GM10248 (cell line): ENCODE measurements at regions of chr4 and their contacts with region 1.

Region 1: GRCh38 chr4:81471588-81472288 is at the start of gene RASGEF1B:
- DNase-seq: peak; percentile 91
- CTCF ChIP-seq: no peak

Region 2: GRCh38 chr4:81432825-81433224 is 38.9 kb before region 1 on chr4:
- CTCF ChIA-PET with region 1: interaction called, 10 read pairs
- POLR2A ChIA-PET with region 1: no interaction called
- DNase-seq: no peak
- CTCF ChIP-seq: no peak

Region 3: DNA sequence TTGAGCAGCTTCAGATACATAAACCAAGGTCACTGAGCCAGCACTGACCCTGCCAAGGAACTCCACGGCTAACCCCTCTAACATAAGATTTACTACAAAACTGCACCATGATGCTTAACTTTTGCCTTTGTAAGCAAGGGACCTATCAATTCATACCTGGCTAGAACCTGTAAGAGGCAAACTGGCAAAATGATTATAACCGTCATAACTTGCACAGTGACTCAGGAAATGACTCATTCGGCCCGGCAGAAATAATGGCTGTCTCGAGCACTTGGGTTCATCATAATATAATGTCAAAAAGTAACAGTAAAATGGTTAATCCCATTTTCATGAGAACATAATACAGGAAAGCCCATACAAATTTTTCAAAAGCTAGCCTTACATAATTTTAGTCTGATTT is 17.2 kb before region 1 on chr4:
- CTCF ChIA-PET with region 1: interaction called, 32 read pairs
- POLR2A ChIA-PET with region 1: no interaction called
- DNase-seq: no peak
- CTCF ChIP-seq: no peak

Region 4: GRCh38 chr4:81839347-81840042 is 367.8 kb after region 1 on chr4:
- CTCF ChIA-PET with region 1: interaction called, 90 read pairs
- POLR2A ChIA-PET with region 1: no interaction called
- DNase-seq: no peak
- CTCF ChIP-seq: no peak

Region 5: GRCh38 chr4:81844717-81845116 is 373.0 kb after region 1 on chr4:
- CTCF ChIA-PET with region 1: interaction called, 90 read pairs
- POLR2A ChIA-PET with region 1: no interaction called
- DNase-seq: peak; percentile 53
- CTCF ChIP-seq: peak; percentile 82

Region 6: DNA sequence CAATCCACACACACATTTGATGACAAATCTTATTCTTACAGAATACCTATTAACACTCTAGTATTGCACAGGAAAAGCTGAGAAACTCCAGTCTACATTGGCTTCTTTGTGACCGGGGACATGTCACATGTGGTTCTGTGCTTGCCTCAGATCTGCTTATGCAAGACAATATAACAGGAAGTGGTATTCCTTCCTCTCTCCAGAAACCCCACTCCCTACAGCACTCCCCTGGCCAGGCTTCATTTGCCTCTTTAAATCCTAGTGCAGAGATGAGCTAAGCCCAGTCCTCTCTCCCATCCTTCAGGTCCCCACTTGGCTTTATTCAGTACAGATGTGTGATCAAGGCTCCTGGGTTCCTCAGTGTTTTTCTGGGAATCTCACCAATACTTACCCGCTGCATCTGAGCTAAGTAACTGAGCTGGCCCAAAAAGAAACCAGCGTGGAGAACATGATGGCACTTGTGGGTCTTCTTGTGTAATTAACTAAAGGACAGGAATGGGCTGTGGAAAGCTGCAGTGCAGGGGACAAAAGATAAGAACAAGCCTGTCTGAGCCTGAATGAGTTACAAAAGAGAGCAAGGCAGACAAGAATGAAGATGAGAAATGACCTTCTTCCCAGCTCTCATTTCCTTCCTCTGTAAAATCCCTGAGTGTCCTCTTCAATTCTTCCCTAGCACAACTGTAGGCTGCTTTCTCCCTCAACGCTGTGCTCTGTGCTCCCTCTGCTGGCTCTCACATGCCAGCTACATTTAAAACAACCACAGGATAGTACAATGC is 796.5 kb after region 1 on chr4:
- CTCF ChIA-PET with region 1: interaction called, 11 read pairs
- POLR2A ChIA-PET with region 1: no interaction called
- DNase-seq: peak; percentile 38
- CTCF ChIP-seq: peak; percentile 89